IMR-90 (cell line): ENCODE measurements at regions of chr15 and their contacts with region 1.

Region 1: GRCh38 chr15:80455668-80456442 is 51.7 kb downstream of the ARNT2 start:
- DNase-seq: peak; percentile 97
- ATAC-seq: peak; percentile 79
- H3K4me3 ChIP-seq: no peak overlapping the region
- H3K27ac ChIP-seq: peak overlapping the region; percentile 79; the same call in 1 of the 2 replicates
- H3K4me1 ChIP-seq: peaks cover 20% of the 10 kb centered on the region
- H3K27me3 ChIP-seq: no peaks in the 10 kb centered on the region
- CTCF ChIP-seq: peak; percentile 99
- POLR2A ChIP-seq: peak; percentile 46; the same call in 1 of the 2 replicates
- RAD21 ChIP-seq: peak; percentile 100

Region 2: GRCh38 chr15:80418892-80419537 is 36.8 kb before region 1 on chr15:
- CTCF ChIA-PET with region 1: interaction called, 3 read pairs
- POLR2A ChIA-PET with region 1: no interaction called
- dilution Hi-C with region 1: no loop called
- in situ Hi-C with region 1: no loop called
- intact Hi-C with region 1: loop called (anchors 2 kb)
- DNase-seq: peak; percentile 72
- ATAC-seq: peak; percentile 59
- H3K4me3 ChIP-seq: no peak overlapping the region
- H3K27ac ChIP-seq: peak overlapping the region; percentile 19
- H3K4me1 ChIP-seq: peaks cover 14% of the 10 kb centered on the region
- H3K27me3 ChIP-seq: no peaks in the 10 kb centered on the region
- CTCF ChIP-seq: peak; percentile 68
- POLR2A ChIP-seq: no peak
- RAD21 ChIP-seq: peak; percentile 56

Region 3: GRCh38 chr15:80550219-80550907 is 94.5 kb after region 1 on chr15:
- CTCF ChIA-PET with region 1: interaction called, 3 read pairs
- POLR2A ChIA-PET with region 1: no interaction called
- dilution Hi-C with region 1: no loop called
- in situ Hi-C with region 1: no loop called
- intact Hi-C with region 1: loop called (anchors 5 kb)
- DNase-seq: peak; percentile 98
- ATAC-seq: peak; percentile 86
- H3K4me3 ChIP-seq: peak overlapping the region; percentile 4; the same call in 1 of the 2 replicates
- H3K27ac ChIP-seq: peak overlapping the region; percentile 98
- H3K4me1 ChIP-seq: peaks cover 20% of the 10 kb centered on the region
- H3K27me3 ChIP-seq: no peaks in the 10 kb centered on the region
- CTCF ChIP-seq: no peak
- POLR2A ChIP-seq: no peak
- RAD21 ChIP-seq: no peak

Region 4: GRCh38 chr15:80609512-80609946 is 153.7 kb after region 1 on chr15:
- CTCF ChIA-PET with region 1: no interaction called
- POLR2A ChIA-PET with region 1: no interaction called
- dilution Hi-C with region 1: no loop called
- in situ Hi-C with region 1: no loop called
- intact Hi-C with region 1: no loop called
- DNase-seq: no peak
- ATAC-seq: no peak
- H3K4me3 ChIP-seq: no peak overlapping the region
- H3K27ac ChIP-seq: no peak overlapping the region
- H3K4me1 ChIP-seq: peaks cover 13% of the 10 kb centered on the region; the same call in 1 of the 2 replicates
- H3K27me3 ChIP-seq: no peaks in the 10 kb centered on the region
- CTCF ChIP-seq: no peak
- POLR2A ChIP-seq: no peak
- RAD21 ChIP-seq: no peak

Region 5: GRCh38 chr15:80619680-80620079 is 163.8 kb after region 1 on chr15:
- CTCF ChIA-PET with region 1: no interaction called
- POLR2A ChIA-PET with region 1: no interaction called
- dilution Hi-C with region 1: no loop called
- in situ Hi-C with region 1: no loop called
- intact Hi-C with region 1: loop called (anchors 2 kb)
- DNase-seq: peak; percentile 43
- ATAC-seq: peak; percentile 54
- H3K4me3 ChIP-seq: no peak overlapping the region
- H3K27ac ChIP-seq: peak overlapping the region; percentile 47; the same call in 1 of the 2 replicates
- H3K4me1 ChIP-seq: peaks cover 32% of the 10 kb centered on the region
- H3K27me3 ChIP-seq: no peaks in the 10 kb centered on the region
- CTCF ChIP-seq: peak; percentile 33; the same call in 1 of the 2 replicates
- POLR2A ChIP-seq: no peak
- RAD21 ChIP-seq: peak; percentile 38

Region 6: DNA sequence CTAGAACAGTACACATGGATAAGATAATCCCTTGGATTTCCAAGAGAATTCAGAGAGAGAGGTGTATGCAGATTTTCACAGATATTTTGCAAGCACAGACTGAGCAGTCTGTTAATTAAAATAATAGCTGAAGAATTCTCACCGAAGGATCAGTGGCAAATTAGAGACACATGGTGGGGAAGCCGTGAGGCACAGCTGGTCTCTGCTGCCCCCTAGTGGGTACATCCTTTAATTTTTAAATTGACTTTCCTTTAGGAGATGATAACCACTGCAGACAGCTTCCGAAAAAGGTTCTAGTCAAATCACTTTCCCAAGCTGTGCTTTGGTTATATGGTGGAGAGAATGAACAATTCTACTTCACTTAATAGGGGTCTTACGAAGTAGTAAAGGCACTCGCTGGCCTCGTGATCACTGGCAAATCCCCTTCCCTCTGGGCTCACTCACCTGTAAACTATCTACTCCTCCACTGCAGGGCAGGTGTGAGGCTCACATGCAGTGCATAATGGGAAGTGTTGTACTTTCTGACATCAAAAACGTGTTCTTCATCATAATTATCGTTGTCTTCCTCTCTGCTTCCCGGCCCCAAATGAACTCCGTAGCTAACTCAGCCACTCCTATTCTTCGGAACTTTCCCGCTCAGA is 514.3 kb after region 1 on chr15:
- CTCF ChIA-PET with region 1: interaction called, 4 read pairs
- POLR2A ChIA-PET with region 1: no interaction called
- dilution Hi-C with region 1: no loop called
- in situ Hi-C with region 1: loop called (anchors 5 kb)
- intact Hi-C with region 1: loop called (anchors 2 kb)
- DNase-seq: peak; percentile 54
- ATAC-seq: peak; percentile 68
- H3K4me3 ChIP-seq: no peak overlapping the region
- H3K27ac ChIP-seq: no peak overlapping the region
- H3K4me1 ChIP-seq: peaks cover 13% of the 10 kb centered on the region
- H3K27me3 ChIP-seq: no peaks in the 10 kb centered on the region
- CTCF ChIP-seq: peak; percentile 86
- POLR2A ChIP-seq: 0 out of 2 replicates have a peak, but pooled peaks have one; percentile 40
- RAD21 ChIP-seq: peak; percentile 96